Psoas muscle (tissue), 8 donors: ENCODE measurements at regions of chr6 and their contacts with region 1.

Region 1: GRCh38 chr6:3732345-3733141 is 19.0 kb downstream of the PXDC1 start:
- DNase-seq: peak; percentile 77 to 87
- ATAC-seq: peak; percentile 85 to 94 (median 90)
- H3K4me3 ChIP-seq: no peak overlapping the region
- H3K27ac ChIP-seq: no peak overlapping the region
- H3K4me1 ChIP-seq: no peaks in the 10 kb centered on the region
- H3K27me3 ChIP-seq: no peaks in the 10 kb centered on the region
- CTCF ChIP-seq: peak; percentile 88

Region 2: GRCh38 chr6:3125815-3126214 is 606.7 kb before region 1 on chr6:
- intact Hi-C with region 1: loop called (anchors 10 kb)
- DNase-seq: no peak
- ATAC-seq: no peak
- H3K4me3 ChIP-seq: no peak overlapping the region
- H3K27ac ChIP-seq: no peak overlapping the region
- H3K4me1 ChIP-seq: no peaks in the 10 kb centered on the region
- H3K27me3 ChIP-seq: no peaks in the 10 kb centered on the region
- CTCF ChIP-seq: no peak

Region 3: DNA sequence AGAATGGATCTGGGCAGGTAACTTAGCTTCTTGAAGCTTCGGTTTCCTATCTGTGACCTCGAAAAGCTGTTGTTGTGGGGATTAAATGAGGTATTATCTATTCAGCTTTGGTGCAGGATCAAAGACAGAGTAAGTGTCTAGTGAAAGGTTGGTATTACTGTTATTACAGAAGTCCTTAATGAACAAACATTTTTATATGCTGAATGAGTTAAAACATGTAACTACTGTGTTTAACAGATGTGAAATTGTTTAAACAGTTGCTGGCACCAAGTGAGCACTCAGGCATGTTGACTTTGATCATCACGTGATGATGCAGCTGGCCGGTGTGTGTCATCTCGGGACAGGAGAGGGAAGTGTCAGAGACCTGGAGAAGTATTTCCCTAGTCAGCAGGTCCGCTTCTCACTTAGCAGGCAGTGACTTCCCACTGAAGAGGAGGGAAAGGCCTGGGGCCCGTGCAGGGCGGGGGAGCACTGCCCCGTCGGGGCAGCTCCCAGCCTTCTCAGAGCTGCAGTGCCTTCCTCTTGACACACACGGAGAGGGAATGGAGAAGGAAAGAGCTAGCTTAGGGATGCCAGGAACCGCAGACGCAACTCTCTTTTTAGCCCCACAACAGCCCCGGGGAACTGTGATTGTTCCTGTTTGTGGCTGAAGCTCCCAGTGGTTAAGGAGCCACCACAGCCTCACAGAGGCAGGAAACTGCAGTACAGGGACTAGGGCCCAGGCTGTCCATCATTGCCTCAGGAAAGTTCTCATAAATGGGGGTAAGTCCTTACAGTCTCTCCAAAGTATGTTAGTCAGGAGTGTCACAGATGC is 593.2 kb before region 1 on chr6:
- intact Hi-C with region 1: loop called in 1 of 2 experiments (anchors 10 kb)
- DNase-seq: peak; percentile 61 to 81
- ATAC-seq: peak; percentile 94 to 96 (median 95)
- H3K4me3 ChIP-seq: peak overlapping the region; percentile 14
- H3K27ac ChIP-seq: peak overlapping the region; percentile 78
- H3K4me1 ChIP-seq: peaks cover 18% of the 10 kb centered on the region
- H3K27me3 ChIP-seq: no peaks in the 10 kb centered on the region
- CTCF ChIP-seq: no peak

Region 4: GRCh38 chr6:3410385-3411360 is 321.9 kb before region 1 on chr6:
- intact Hi-C with region 1: loop called in 1 of 2 experiments (anchors 5 kb)
- DNase-seq: peak in 1 of 2 donors; percentile 57
- ATAC-seq: peak in 2 of 4 donors; percentile 59
- H3K4me3 ChIP-seq: no peak overlapping the region
- H3K27ac ChIP-seq: no peak overlapping the region
- H3K4me1 ChIP-seq: peaks cover 32% of the 10 kb centered on the region
- H3K27me3 ChIP-seq: no peaks in the 10 kb centered on the region
- CTCF ChIP-seq: peak; percentile 72

Region 5: DNA sequence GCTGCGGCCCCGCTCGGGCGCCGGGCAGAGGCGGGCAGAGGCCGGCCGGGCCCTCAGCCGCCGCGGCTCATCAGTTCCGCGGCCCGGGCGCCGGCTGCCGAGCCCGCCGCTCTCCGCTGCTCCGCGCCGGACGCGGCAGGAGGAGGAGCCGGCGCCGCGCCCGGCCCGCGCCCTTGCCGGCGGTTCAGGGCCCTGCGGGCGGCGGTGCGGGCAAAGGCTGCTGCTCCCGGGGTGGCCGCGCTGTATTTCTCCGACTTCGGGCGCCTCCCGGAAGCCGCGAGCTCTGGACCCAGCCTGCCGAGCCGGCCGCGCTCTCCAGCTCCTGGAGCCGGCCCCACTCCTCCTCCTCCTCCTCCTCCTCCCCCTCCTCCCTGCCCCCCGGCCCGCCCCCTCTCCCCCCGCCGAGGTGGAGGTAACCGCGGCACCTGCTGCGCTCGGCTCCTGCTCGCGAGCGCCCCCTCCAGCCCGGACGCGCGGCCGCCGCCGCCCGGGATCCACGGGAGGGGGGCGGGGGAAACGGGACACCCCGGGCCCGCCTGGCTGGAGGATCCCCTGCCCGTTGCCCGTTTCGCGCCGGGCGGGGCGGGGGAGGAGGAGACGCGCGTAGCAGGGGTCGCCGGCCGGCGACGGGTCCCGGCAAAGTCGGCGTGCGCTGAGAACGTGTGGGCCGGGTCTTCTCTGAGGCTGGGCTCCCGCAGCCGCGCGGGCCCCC is 275.6 kb before region 1 on chr6 and contains the start of gene SLC22A23:
- intact Hi-C with region 1: loop called in 1 of 2 experiments (anchors 1 kb)
- DNase-seq: peak; percentile 76 to 88
- ATAC-seq: peak; percentile 90 to 92 (median 90)
- H3K4me3 ChIP-seq: peak within 1 kb of the TSS; percentile 78
- H3K27ac ChIP-seq: peak within 1 kb of the TSS; percentile 80
- H3K4me1 ChIP-seq: peaks cover 7% of the 10 kb centered on the region
- H3K27me3 ChIP-seq: no peaks in the 10 kb centered on the region
- CTCF ChIP-seq: peak; percentile 74
- total RNA-seq, gene SLC22A23: 8.7 to 13.7 (median 13.2) TPM

Region 6: DNA sequence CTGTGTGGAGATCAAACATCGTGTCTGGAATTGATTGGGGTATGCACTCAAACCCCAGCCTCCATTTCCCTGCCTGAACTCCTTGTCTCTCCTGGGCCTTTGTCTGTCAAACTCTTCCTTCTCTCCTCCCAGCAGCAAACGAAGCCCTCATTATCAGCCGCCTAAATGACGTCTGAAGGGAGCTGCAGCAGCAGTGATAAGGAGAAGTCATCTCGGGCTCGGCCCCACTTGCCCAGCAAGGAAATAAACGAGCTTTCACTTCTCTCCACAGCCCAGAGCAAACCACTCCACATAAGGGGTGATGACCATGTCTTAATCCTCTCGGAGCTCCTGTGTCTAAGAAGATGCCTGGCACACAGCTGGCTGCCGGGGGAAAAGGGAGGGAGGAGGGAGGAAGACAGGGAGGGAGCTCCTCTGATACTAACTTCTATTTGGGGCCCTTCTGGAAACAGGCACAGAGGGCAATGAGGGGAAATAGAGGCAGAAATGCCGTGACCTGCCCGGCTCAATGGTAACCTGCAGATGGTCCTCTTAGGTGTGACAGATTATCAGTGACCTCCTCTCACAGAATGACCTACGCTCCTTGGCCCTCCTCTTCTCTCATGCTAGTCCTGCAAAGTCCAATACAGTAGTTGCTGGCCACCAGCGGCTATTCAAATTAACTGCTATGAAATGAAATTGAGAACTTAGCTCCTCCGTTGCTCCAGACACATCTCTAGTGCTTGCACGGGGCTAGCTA is 81.4 kb before region 1 on chr6:
- intact Hi-C with region 1: no loop called
- DNase-seq: no peak
- ATAC-seq: no peak
- H3K4me3 ChIP-seq: no peak overlapping the region
- H3K27ac ChIP-seq: no peak overlapping the region
- H3K4me1 ChIP-seq: no peaks in the 10 kb centered on the region
- H3K27me3 ChIP-seq: no peaks in the 10 kb centered on the region
- CTCF ChIP-seq: no peak

Region 7: DNA sequence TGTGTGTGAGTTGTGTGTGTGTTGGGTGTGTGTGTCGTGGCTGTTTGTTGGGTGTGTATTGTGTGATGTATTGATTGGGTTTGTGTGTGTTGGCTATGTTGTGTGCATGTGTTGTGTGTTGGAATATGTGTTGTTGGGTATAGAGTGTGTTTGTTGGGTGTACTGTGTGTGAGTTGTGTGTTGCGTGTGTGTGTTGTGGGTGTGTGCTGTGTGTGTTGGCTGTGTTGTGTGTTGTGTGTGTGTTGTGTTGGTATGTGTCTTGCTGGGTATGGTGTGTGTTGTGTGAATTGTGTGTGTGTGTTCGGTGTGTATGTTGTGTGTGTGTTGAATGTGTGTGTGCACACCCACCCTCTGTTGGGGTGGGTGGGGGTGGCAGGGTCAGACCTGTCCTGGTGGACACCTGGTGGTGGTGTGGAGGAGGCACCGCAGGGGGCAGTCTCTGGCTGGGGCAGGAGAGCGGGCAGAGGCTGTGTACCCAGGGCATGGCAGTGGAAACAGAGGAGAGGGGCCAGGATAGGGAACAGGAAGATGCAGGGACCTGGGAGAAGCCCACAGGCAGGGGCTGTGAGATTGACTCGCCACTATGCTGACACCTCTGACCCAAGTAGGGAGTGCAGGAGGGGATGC is 44.5 kb after region 1 on chr6:
- intact Hi-C with region 1: no loop called
- DNase-seq: no peak
- ATAC-seq: peak in 2 of 4 donors; percentile 38 to 58
- H3K4me3 ChIP-seq: no peak overlapping the region
- H3K27ac ChIP-seq: no peak overlapping the region
- H3K4me1 ChIP-seq: no peaks in the 10 kb centered on the region
- H3K27me3 ChIP-seq: peaks cover 0 to 3% (median 0%) of the 10 kb centered on the region in 3 donors
- CTCF ChIP-seq: no peak